ENCODE measurements at regions of chr17 and their contacts with region 1.

Region 1: GRCh38 chr17:27946513-27946912 is 53.3 kb upstream of the LYRM9 start:
- DNase-seq: no peak
- ATAC-seq: no peak
- H3K4me3 ChIP-seq: no peak overlapping the region
- H3K27ac ChIP-seq: no peak overlapping the region
- H3K4me1 ChIP-seq: no peaks in the 10 kb centered on the region
- H3K27me3 ChIP-seq: no peaks in the 10 kb centered on the region
- CTCF ChIP-seq: no peak

Region 2: GRCh38 chr17:27609611-27610303 is 336.8 kb before region 1 on chr17:
- intact Hi-C with region 1: no loop called
- DNase-seq: no peak
- ATAC-seq: peak in 2 of 4 donors; percentile 51 to 54
- H3K4me3 ChIP-seq: no peak overlapping the region
- H3K27ac ChIP-seq: no peak overlapping the region
- H3K4me1 ChIP-seq: no peaks in the 10 kb centered on the region
- H3K27me3 ChIP-seq: no peaks in the 10 kb centered on the region
- CTCF ChIP-seq: peak; percentile 33

Region 3: GRCh38 chr17:27782791-27783206 is 163.7 kb before region 1 on chr17:
- intact Hi-C with region 1: loop called in 1 of 2 experiments (anchors 1 kb)
- DNase-seq: peak in 1 of 2 donors; percentile 33
- ATAC-seq: no peak
- H3K4me3 ChIP-seq: no peak overlapping the region
- H3K27ac ChIP-seq: no peak overlapping the region
- H3K4me1 ChIP-seq: no peaks in the 10 kb centered on the region
- H3K27me3 ChIP-seq: no peaks in the 10 kb centered on the region
- CTCF ChIP-seq: no peak